MCF 10A (cell line): ENCODE measurements at regions of chr6 and their contacts with region 1.

Region 1: DNA sequence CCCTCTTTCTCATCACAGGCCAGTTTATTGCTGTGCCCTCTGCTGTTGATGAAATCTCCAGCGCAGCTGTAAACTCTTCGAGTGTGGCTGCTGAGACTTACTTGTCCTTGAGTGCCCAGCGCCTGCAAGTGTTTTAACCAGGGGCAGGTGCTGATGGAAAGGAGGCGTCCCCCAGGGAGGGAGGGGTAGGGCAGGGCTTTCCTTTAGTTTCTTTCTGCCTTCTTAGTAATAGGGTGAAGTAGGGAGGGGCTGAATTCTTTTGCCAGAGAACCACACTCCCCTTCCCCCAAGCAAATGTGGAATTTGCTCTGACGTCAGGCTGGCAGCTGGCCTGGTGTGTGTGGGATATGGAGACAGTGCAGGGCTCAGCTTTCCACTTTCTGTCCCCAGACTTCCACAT is 61.2 kb downstream of the IGF2R start:
- DNase-seq: peak; percentile 92
- H3K4me3 Mint-ChIP-seq: peak overlapping the region; percentile 63
- H3K27ac Mint-ChIP-seq: peak overlapping the region; percentile 95
- H3K4me1 Mint-ChIP-seq: peaks cover 38% of the 10 kb centered on the region
- H3K27me3 Mint-ChIP-seq: no peaks in the 10 kb centered on the region
- CTCF ChIP-seq: no peak

Region 2: DNA sequence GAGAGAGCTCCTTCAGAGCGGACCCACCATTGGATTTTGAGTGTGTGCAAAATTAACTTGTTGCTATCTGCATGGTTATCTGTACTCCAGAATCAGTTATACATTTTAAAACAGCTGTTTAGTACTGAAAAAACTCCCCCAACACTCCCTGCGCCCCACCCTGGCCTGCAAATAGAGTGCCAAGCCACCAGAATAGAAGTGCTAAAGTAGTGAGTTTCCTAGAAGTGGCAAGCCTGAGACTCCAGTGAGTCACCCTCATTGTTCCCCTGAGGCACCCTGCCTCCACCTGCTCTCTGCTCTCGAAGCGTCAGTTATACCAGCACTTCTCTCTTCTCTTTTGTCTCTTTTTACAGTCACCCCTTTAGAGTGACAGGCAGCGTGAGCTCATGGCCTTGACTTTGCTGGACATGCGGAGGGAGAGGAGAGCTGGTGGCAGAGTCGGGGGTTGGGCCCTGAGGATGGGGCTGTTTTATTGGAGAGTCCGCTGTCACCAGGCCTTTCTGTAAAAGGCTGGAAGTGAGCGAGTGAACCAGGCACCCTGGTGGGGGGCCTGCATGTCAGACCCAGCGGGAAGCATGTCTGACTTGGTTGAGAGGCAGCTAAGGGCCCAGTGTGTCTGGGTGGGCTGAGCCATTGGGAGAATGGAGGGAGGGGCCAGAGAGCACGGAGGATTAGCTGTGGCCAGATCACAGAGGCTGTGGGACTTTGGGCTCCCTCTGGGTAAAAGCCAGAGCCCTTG is 50.8 kb before region 1 on chr6:
- CTCF ChIA-PET with region 1: no interaction called
- POLR2A ChIA-PET with region 1: interaction called, 13 read pairs
- intact Hi-C with region 1: no loop called
- DNase-seq: peak; percentile 84
- H3K4me3 Mint-ChIP-seq: peak overlapping the region; percentile 17
- H3K27ac Mint-ChIP-seq: peak overlapping the region; percentile 47
- H3K4me1 Mint-ChIP-seq: peaks cover 75% of the 10 kb centered on the region
- H3K27me3 Mint-ChIP-seq: no peaks in the 10 kb centered on the region
- CTCF ChIP-seq: no peak

Region 3: GRCh38 chr6:160065200-160065599 is 35.1 kb after region 1 on chr6:
- CTCF ChIA-PET with region 1: no interaction called
- POLR2A ChIA-PET with region 1: no interaction called
- intact Hi-C with region 1: no loop called
- DNase-seq: no peak
- H3K4me3 Mint-ChIP-seq: no peak overlapping the region
- H3K27ac Mint-ChIP-seq: no peak overlapping the region
- H3K4me1 Mint-ChIP-seq: no peaks in the 10 kb centered on the region
- H3K27me3 Mint-ChIP-seq: no peaks in the 10 kb centered on the region
- CTCF ChIP-seq: no peak